ENCODE measurements at regions of chr18 and their contacts with region 1.

Region 1: DNA sequence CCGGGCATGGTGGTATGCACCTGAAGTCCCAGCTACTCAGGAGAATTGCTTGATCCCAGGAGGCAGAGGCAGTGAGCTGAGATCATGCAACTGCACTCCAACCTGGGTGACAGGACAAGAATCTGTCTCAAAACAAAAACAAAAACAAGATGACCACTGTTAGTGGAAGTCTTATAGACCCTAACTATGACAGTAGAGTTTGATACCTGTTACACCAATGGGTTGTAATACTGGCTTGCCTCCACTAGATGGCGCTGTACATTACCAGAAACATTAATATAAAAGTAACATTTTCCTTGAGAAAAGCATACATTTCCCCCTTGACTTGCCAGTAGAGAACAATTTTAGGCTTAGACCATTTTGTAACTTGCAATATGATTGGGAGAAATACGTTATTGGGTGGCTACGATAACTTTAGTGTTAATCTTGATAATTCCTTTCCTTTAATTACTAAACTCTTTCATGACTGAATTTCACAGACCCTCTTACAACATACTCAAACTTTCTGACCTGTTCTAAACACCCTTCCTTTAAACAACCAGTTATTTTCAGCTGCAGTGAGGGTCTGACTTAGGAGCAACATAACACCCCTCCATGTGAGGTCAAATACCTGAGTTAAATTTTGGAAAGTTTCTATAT is 19.5 kb downstream of the SLC25A52 start:
- DNase-seq: peak; percentile 62
- H3K4me3 ChIP-seq: no peak overlapping the region
- H3K27ac ChIP-seq: no peak overlapping the region
- H3K4me1 ChIP-seq: no peaks in the 10 kb centered on the region
- H3K27me3 ChIP-seq: no peaks in the 10 kb centered on the region
- CTCF ChIP-seq: peak; percentile 85

Region 2: DNA sequence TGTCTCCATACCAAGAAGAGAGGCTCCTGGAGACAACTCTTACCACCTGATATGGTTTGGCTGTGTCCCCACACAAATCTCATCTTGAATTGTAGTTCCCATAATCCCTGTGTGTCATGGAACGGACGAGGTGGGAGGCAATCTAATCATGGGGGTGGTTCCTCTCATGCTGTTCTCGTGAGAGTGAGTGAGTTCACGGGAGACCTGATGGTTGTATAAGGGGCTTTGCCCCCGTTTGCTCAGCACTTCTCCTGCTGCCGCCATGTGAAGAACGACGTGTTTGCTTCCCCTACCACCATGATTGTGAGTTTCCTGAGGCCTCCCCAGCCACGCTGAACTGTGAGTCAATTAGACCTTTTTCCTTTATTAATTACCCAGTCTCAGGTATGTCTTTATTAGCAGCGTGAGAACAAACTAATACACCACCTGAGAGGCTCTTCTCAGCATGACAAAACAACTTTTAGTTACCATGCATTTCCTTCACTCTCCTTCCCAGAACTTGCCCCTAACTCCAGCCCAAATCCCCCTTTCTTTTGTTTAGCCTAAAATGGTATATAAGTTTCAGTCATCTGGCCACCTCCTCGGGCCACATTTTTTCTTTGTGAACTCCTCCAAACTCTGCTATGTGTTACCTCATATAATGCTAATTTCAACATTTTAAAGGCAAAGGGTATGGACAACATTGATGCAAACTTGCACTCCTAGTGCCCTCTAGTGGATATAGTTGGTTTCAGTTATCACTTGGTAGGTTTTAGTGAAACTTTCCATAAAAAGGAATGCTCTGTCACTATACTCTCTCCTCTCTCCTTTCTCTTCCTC is 78.1 kb after region 1 on chr18:
- CTCF ChIA-PET with region 1: no interaction called
- POLR2A ChIA-PET with region 1: no interaction called
- intact Hi-C with region 1: loop called (anchors 5 kb)
- DNase-seq: peak; percentile 68
- H3K4me3 ChIP-seq: no peak overlapping the region
- H3K27ac ChIP-seq: no peak overlapping the region
- H3K4me1 ChIP-seq: no peaks in the 10 kb centered on the region
- H3K27me3 ChIP-seq: peaks cover 1% of the 10 kb centered on the region
- CTCF ChIP-seq: peak; percentile 80

Region 3: DNA sequence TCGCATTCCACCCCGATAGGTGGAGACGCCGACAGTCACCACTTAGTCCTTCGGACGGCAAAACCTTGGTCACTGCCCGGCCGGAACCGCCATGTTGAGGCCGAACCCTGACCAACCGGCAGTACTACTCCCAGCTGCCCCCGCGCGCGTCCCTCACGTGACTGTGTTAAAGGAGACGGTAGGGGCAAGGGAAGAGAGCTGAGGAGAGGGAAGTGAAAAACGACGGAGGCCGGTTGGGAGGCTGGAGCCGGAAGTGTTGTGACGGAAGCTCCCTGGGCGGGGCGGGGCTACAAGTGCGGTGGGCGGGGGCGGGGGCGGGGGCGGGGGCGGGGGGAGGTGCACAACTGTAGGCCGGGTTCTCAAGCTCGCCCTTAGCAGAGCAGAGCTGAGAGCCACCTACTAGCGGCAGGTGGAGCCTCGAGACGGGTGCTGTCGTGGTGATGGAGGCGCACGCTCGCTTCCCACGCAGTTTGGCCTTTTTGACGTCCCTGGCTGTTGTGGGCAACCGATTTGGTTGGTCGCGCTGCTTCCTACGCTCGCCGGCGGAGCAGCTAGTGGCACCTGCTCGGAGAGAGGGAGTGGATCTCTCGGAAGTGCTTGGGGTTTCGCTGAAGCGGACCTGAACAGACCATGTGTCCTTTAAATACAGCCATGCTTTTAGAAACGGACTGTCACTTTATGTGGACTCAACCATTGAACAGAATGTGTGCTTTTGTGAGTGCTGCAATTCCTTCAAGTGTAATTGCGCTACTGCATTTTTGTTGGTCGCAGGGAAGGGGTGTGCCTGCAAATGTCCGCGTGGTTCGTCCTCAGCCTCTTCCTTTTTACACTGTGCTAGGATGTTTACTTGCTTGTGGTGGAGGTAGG is 202.0 kb after region 1 on chr18 and contains the start of gene TRAPPC8:
- CTCF ChIA-PET with region 1: interaction called, 18 read pairs
- POLR2A ChIA-PET with region 1: no interaction called
- intact Hi-C with region 1: no loop called
- DNase-seq: peak; percentile 98
- H3K4me3 ChIP-seq: peak within 1 kb of the TSS; percentile 100
- H3K27ac ChIP-seq: peak within 1 kb of the TSS; percentile 93
- H3K4me1 ChIP-seq: peaks cover 5% of the 10 kb centered on the region
- H3K27me3 ChIP-seq: no peaks in the 10 kb centered on the region
- CTCF ChIP-seq: no peak
- total RNA-seq, gene TRAPPC8: 34.1 and 37.9 TPM in 2 replicates

Region 4: DNA sequence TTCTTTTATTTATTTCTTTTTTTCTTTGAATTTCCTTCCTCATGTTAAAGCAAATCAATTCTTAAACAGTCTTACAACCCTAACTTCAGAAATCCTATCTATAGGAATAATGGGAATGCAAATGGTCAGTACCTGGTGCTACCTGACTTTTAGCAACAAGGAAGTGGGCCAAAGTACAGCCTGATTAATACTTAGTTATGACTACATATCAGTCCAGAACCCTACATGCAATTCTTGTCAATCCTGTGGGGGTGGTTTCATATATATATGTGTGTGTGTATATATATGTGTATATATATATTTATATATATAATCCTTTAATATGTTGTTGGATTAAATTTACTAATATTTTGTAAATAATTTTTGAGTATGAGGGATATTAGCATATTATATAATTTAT is 216.5 kb after region 1 on chr18:
- CTCF ChIA-PET with region 1: no interaction called
- POLR2A ChIA-PET with region 1: no interaction called
- intact Hi-C with region 1: loop called (anchors 1 kb)
- DNase-seq: no peak
- H3K4me3 ChIP-seq: no peak overlapping the region
- H3K27ac ChIP-seq: no peak overlapping the region
- H3K4me1 ChIP-seq: no peaks in the 10 kb centered on the region
- H3K27me3 ChIP-seq: no peaks in the 10 kb centered on the region
- CTCF ChIP-seq: no peak

Region 5: DNA sequence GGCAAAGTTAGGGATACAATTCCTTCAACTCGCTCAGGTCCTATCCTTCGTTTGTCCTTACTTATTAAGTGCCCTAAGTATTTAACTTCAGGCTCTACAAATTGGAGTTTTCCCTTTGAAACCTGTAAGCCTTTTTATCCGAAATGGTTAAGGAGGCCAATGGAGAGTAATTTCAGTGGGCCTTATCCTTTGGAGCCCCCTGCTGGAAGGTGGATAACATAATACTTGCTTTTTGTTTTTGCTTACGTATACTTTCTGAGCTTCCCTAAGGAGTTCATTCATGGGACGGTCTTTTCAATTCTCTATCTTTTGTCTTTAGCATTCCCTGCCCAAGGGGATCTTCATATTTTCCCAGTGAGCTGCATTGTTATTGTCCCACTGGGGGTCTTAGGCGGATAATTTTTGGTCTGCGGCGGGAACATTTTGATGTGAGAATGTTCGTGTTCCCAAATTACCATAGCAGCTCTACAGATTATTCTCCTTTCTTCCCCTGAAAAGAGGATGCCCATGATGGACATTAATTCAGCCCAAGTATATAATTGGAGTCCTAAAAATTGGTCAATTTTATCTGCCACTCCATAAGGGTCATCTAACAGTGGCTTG is 236.2 kb after region 1 on chr18:
- CTCF ChIA-PET with region 1: interaction called, 3 read pairs
- POLR2A ChIA-PET with region 1: no interaction called
- intact Hi-C with region 1: loop called (anchors 2 kb)
- DNase-seq: peak; percentile 83
- H3K4me3 ChIP-seq: no peak overlapping the region
- H3K27ac ChIP-seq: no peak overlapping the region
- H3K4me1 ChIP-seq: no peaks in the 10 kb centered on the region
- H3K27me3 ChIP-seq: no peaks in the 10 kb centered on the region
- CTCF ChIP-seq: peak; percentile 78